Gastrocnemius medialis (tissue), 4 donors: ENCODE measurements at regions of chr12 and their contacts with region 1.

Region 1: DNA sequence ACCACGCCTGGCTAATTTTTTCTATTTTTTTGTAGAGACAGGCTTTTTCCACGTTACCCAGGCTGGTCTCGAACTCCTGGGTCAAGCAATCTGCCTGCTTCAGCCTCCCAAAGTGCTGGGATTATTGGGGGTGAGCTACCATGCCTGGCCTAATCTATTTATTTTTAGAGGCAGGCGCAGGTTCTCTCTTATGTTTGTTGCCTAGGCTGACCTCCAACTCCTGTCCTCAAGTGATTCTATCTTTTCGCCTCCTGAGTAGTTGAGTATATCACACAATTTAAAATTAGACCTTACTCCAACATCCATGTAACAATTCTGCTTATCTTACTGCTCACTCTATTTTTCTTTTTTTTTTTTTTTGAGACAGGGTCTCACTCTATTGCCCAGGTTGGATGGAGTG is 6.8 kb upstream of the ACRBP start:
- DNase-seq: no peak
- ATAC-seq: no peak
- H3K4me3 ChIP-seq: no peak overlapping the region
- H3K27ac ChIP-seq: no peak overlapping the region
- H3K4me1 ChIP-seq: no peaks in the 10 kb centered on the region
- H3K27me3 ChIP-seq: no peaks in the 10 kb centered on the region
- CTCF ChIP-seq: no peak
- POLR2A ChIP-seq: no peak

Region 2: DNA sequence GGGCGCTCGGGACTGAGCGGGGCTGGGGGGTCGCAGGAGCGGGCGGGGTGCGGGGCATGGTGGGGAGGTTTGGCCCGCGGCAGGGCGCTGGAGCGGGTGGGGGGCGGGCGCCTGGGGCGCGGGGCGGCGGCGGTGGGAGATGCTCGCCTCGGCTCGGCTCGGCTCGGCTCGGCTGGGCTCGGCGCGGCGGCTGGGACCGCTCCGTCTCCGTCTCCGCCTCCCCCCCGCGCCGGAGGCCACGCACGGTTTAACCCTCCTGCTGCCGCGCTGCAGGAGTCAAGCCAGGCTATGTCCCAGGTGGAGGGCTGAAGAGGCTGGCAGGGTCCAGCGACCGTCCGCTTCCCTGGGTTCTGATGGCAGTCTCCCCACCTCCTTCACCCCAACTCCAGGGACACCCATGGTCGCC is 46.7 kb after region 1 on chr12 and contains the start of gene PIANP:
- in situ Hi-C with region 1: loop called in 1 of 4 experiments (anchors 10 kb)
- intact Hi-C with region 1: no loop called
- DNase-seq: no peak
- ATAC-seq: no peak
- H3K4me3 ChIP-seq: peak within 1 kb of the TSS; percentile 27 to 38 (median 36)
- H3K27ac ChIP-seq: no peak within 1 kb of the TSS
- H3K4me1 ChIP-seq: peaks cover 0 to 2% of the 10 kb centered on the region in 2 donors
- H3K27me3 ChIP-seq: peaks cover 74 to 92% (median 76%) of the 10 kb centered on the region in 3 donors
- CTCF ChIP-seq: no peak
- POLR2A ChIP-seq: no peak
- total RNA-seq, gene PIANP: not detected

Region 3: GRCh38 chr12:6745741-6746525 is 91.9 kb after region 1 on chr12:
- in situ Hi-C with region 1: no loop called
- intact Hi-C with region 1: no loop called
- DNase-seq: no peak
- ATAC-seq: no peak
- H3K4me3 ChIP-seq: no peak overlapping the region
- H3K27ac ChIP-seq: peak overlapping the region; percentile 14 to 55 (median 50)
- H3K4me1 ChIP-seq: peaks cover 0 to 4% of the 10 kb centered on the region in 2 donors
- H3K27me3 ChIP-seq: no peaks in the 10 kb centered on the region
- CTCF ChIP-seq: no peak
- POLR2A ChIP-seq: no peak

Region 4: GRCh38 chr12:6996040-6996441 is 342.1 kb after region 1 on chr12:
- in situ Hi-C with region 1: no loop called
- intact Hi-C with region 1: no loop called
- DNase-seq: peak; percentile 49 to 79
- ATAC-seq: peak; percentile 67 to 69
- H3K4me3 ChIP-seq: no peak overlapping the region
- H3K27ac ChIP-seq: peak overlapping the region; percentile 88 to 91 (median 88)
- H3K4me1 ChIP-seq: peaks cover 39 to 45% of the 10 kb centered on the region in 2 donors
- H3K27me3 ChIP-seq: no peaks in the 10 kb centered on the region
- CTCF ChIP-seq: no peak
- POLR2A ChIP-seq: no peak